Breast epithelium (tissue), 4 donors: ENCODE measurements at regions of chr4 and their contacts with region 1.

Region 1: DNA sequence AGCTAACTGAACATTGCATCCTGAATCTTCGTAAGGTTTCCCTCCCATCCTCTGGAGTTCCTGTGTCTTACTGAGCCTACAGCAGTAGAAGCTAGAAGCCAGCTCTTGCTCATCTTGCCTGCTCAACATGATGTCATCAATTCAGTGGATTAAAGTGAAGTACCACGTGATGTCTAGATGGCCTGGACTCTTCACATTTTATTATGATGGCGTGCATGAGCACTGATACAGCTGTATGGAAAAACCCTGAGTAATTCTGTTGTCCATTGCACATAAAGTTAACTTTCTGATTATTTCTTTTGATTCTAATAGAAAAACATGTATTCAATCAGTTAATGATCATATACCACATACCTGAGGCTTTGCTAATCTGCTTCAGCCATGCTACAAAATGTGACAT is 2387.7 kb upstream of the TENM3 start:
- DNase-seq: no peak
- H3K4me3 ChIP-seq: no peak overlapping the region
- H3K27ac ChIP-seq: no peak overlapping the region
- H3K4me1 ChIP-seq: no peaks in the 10 kb centered on the region
- H3K27me3 ChIP-seq: no peaks in the 10 kb centered on the region
- CTCF ChIP-seq: no peak
- POLR2A ChIP-seq: no peak

Region 2: GRCh38 chr4:179867300-179867878 is 11.9 kb after region 1 on chr4:
- intact Hi-C with region 1: loop called (anchors 1 kb)
- DNase-seq: no peak
- H3K4me3 ChIP-seq: no peak overlapping the region
- H3K27ac ChIP-seq: no peak overlapping the region
- H3K4me1 ChIP-seq: no peaks in the 10 kb centered on the region
- H3K27me3 ChIP-seq: no peaks in the 10 kb centered on the region
- CTCF ChIP-seq: peak in 1 of 3 donors; percentile 22
- POLR2A ChIP-seq: no peak

Region 3: GRCh38 chr4:180788729-180789128 is 933.3 kb after region 1 on chr4:
- intact Hi-C with region 1: loop called (anchors 5 kb)
- DNase-seq: no peak
- H3K4me3 ChIP-seq: no peak overlapping the region
- H3K27ac ChIP-seq: no peak overlapping the region
- H3K4me1 ChIP-seq: no peaks in the 10 kb centered on the region
- H3K27me3 ChIP-seq: no peaks in the 10 kb centered on the region
- CTCF ChIP-seq: no peak
- POLR2A ChIP-seq: no peak